A673 (cell line): ENCODE measurements at regions of chrX and their contacts with region 1.

Region 1: GRCh38 chrX:95718746-95719145 is 965.9 kb upstream of the DIAPH2 start:
- DNase-seq: no peak
- H3K4me3 ChIP-seq: no peak overlapping the region
- H3K27ac ChIP-seq: peak overlapping the region; percentile 67
- H3K4me1 ChIP-seq: peaks cover 7% of the 10 kb centered on the region
- H3K27me3 ChIP-seq: no peaks in the 10 kb centered on the region
- CTCF ChIP-seq: no peak

Region 2: GRCh38 chrX:95346856-95347255 is 371.9 kb before region 1 on chrX:
- CTCF ChIA-PET with region 1: no interaction called
- POLR2A ChIA-PET with region 1: no interaction called
- intact Hi-C with region 1: loop called (anchors 5 kb)
- DNase-seq: peak; percentile 39
- H3K4me3 ChIP-seq: no peak overlapping the region
- H3K27ac ChIP-seq: no peak overlapping the region
- H3K4me1 ChIP-seq: no peaks in the 10 kb centered on the region
- H3K27me3 ChIP-seq: no peaks in the 10 kb centered on the region
- CTCF ChIP-seq: peak; percentile 54; the same call in 1 of the 2 replicates

Region 3: GRCh38 chrX:95791876-95792275 is 73.1 kb after region 1 on chrX:
- CTCF ChIA-PET with region 1: no interaction called
- POLR2A ChIA-PET with region 1: no interaction called
- intact Hi-C with region 1: no loop called
- DNase-seq: no peak
- H3K4me3 ChIP-seq: no peak overlapping the region
- H3K27ac ChIP-seq: no peak overlapping the region
- H3K4me1 ChIP-seq: no peaks in the 10 kb centered on the region
- H3K27me3 ChIP-seq: no peaks in the 10 kb centered on the region
- CTCF ChIP-seq: no peak